CD4-positive, alpha-beta T cell (primary cell): ENCODE measurements at regions of chr3 and their contacts with region 1.

Region 1: GRCh38 chr3:53293867-53294266 is 38.0 kb upstream of the TKT start:
- DNase-seq: no peak
- ATAC-seq: no peak
- H3K4me3 ChIP-seq: no peak overlapping the region
- H3K4me3 Mint-ChIP-seq: no peak overlapping the region
- H3K27ac ChIP-seq: no peak overlapping the region
- H3K27ac Mint-ChIP-seq: no peak overlapping the region
- H3K4me1 ChIP-seq: no peaks in the 10 kb centered on the region
- H3K4me1 Mint-ChIP-seq: no peaks in the 10 kb centered on the region
- H3K27me3 ChIP-seq: no peaks in the 10 kb centered on the region
- H3K27me3 Mint-ChIP-seq: no peaks in the 10 kb centered on the region
- CTCF ChIP-seq: no peak

Region 2: DNA sequence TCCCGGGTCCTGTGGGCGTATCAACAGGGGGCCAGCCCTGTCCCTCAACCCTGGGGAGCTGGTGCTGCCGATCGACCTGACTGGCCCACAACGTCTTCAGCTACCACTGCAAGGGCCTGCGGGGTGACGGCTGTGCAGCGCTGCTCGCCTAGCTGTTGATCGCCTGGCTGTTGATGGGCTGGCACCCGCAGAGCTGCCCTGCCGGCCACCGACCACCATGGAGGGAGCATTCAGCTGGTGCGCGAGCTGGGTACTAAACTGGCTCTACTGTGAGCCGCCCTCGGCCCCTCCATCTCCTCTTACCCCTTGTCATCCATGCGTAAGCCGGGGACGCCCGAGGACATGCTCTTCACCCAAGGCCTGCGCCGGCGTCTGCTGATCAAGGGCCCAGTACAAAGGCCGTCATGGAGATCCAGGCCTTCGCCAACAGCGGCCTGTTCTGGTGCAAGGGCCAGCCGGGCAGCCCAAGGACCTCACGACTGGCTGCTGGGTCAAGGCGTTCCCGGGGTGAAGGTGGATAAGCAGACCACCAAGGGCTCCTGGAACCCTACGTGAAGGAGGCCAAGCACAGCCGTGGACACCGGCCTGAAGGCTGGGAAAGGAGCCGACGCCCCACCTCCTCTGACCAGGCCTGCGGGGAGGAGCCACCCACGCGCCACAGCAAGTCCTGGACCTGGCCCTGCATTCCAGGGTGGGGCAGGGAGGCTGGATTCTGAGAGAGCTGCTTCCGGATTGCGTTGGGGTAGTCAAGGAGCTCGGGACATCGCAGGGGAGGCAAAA is 294.9 kb before region 1 on chr3:
- CTCF ChIA-PET with region 1: no interaction called
- POLR2A ChIA-PET with region 1: no interaction called
- intact Hi-C with region 1: no loop called
- DNase-seq: no peak
- ATAC-seq: no peak
- H3K4me3 ChIP-seq: no peak overlapping the region
- H3K4me3 Mint-ChIP-seq: no peak overlapping the region
- H3K27ac ChIP-seq: no peak overlapping the region
- H3K27ac Mint-ChIP-seq: no peak overlapping the region
- H3K4me1 ChIP-seq: no peaks in the 10 kb centered on the region
- H3K4me1 Mint-ChIP-seq: peaks cover 25% of the 10 kb centered on the region
- H3K27me3 ChIP-seq: no peaks in the 10 kb centered on the region
- H3K27me3 Mint-ChIP-seq: no peaks in the 10 kb centered on the region
- CTCF ChIP-seq: no peak

Region 3: GRCh38 chr3:53278667-53279066 is 15.2 kb before region 1 on chr3:
- CTCF ChIA-PET with region 1: no interaction called
- POLR2A ChIA-PET with region 1: no interaction called
- intact Hi-C with region 1: no loop called
- DNase-seq: no peak
- ATAC-seq: no peak
- H3K4me3 ChIP-seq: no peak overlapping the region
- H3K4me3 Mint-ChIP-seq: no peak overlapping the region
- H3K27ac ChIP-seq: no peak overlapping the region
- H3K27ac Mint-ChIP-seq: no peak overlapping the region
- H3K4me1 ChIP-seq: no peaks in the 10 kb centered on the region
- H3K4me1 Mint-ChIP-seq: peaks cover 9% of the 10 kb centered on the region
- H3K27me3 ChIP-seq: no peaks in the 10 kb centered on the region
- H3K27me3 Mint-ChIP-seq: no peaks in the 10 kb centered on the region
- CTCF ChIP-seq: no peak

Region 4: DNA sequence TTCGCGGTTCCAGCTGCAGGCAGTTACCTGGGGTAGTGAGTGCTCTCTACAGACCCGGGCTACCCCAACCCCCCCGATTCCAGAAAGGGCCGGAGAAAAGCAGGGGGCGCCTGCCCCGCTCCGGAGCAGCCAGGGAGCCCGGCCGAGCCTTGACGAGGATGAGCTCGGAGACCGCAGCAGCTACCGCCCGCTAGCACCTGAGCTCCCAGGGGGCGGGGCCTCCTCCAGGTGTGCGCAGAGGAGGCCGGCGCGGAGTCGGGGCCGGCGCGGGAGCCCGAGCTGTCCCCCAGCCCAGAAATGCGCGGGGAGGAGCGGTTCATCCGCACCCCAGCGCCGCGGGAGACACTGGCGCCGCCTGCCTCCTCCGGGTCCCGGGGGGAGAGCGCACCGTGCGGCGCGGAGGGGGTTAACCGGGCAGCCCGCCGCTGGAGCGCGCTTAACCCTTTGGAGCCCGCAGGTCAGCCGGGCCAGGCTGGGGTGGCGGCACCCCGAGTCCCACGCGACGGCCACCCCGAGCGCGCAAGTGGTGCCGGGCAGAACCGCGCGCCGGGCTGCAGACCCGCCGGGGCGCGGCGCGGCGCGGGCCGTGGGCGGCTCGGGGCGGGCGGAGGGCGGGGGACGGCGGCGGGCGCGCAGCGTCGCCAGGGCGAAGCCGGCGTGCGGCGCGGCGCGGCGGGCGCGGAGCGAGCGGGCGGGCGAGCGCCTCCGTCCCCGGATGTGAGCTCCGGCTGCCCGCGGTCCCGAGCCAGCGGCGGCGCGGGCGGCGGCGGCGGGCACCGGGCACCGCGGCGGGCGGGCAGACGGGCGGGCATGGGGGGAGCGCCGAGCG is 200.3 kb after region 1 on chr3 and contains the start of gene CACNA1D:
- CTCF ChIA-PET with region 1: no interaction called
- POLR2A ChIA-PET with region 1: no interaction called
- intact Hi-C with region 1: loop called in 1 of 2 experiments (anchors 10 kb)
- DNase-seq: no peak
- ATAC-seq: no peak
- H3K4me3 ChIP-seq: no peak within 1 kb of the TSS
- H3K4me3 Mint-ChIP-seq: peak within 1 kb of the TSS; percentile 71
- H3K27ac ChIP-seq: no peak within 1 kb of the TSS
- H3K27ac Mint-ChIP-seq: no peak within 1 kb of the TSS
- H3K4me1 ChIP-seq: peaks cover 10% of the 10 kb centered on the region
- H3K4me1 Mint-ChIP-seq: no peaks in the 10 kb centered on the region
- H3K27me3 ChIP-seq: peaks cover 54 to 58% of the 10 kb centered on the region in 2 experiments
- H3K27me3 Mint-ChIP-seq: peaks cover 77% of the 10 kb centered on the region
- CTCF ChIP-seq: no peak
- total RNA-seq, gene CACNA1D: not detected